Activated CD8-positive, alpha-beta memory T cell treated with anti-CD3 and anti-CD28 coated beads, Interleukin-2, amount 10 ng/mL, durations not matched to agents 7 days and 5 days (primary cell): ENCODE measurements at regions of chr22 and their contacts with region 1.

Region 1: GRCh38 chr22:50456466-50457234 is 18.2 kb downstream of the SBF1 start:
- DNase-seq: no peak
- ATAC-seq: no peak
- H3K4me3 Mint-ChIP-seq: no peak overlapping the region
- H3K27ac Mint-ChIP-seq: peak overlapping the region; percentile 18
- H3K4me1 Mint-ChIP-seq: peaks cover 9% of the 10 kb centered on the region
- H3K27me3 Mint-ChIP-seq: no peaks in the 10 kb centered on the region

Region 2: GRCh38 chr22:50341977-50342650 is 114.5 kb before region 1 on chr22:
- CTCF ChIA-PET with region 1: no interaction called
- DNase-seq: peak; percentile 93
- ATAC-seq: peak; percentile 58
- H3K4me3 Mint-ChIP-seq: peak overlapping the region; percentile 77
- H3K27ac Mint-ChIP-seq: peak overlapping the region; percentile 89
- H3K4me1 Mint-ChIP-seq: peaks cover 8% of the 10 kb centered on the region
- H3K27me3 Mint-ChIP-seq: no peaks in the 10 kb centered on the region

Region 3: DNA sequence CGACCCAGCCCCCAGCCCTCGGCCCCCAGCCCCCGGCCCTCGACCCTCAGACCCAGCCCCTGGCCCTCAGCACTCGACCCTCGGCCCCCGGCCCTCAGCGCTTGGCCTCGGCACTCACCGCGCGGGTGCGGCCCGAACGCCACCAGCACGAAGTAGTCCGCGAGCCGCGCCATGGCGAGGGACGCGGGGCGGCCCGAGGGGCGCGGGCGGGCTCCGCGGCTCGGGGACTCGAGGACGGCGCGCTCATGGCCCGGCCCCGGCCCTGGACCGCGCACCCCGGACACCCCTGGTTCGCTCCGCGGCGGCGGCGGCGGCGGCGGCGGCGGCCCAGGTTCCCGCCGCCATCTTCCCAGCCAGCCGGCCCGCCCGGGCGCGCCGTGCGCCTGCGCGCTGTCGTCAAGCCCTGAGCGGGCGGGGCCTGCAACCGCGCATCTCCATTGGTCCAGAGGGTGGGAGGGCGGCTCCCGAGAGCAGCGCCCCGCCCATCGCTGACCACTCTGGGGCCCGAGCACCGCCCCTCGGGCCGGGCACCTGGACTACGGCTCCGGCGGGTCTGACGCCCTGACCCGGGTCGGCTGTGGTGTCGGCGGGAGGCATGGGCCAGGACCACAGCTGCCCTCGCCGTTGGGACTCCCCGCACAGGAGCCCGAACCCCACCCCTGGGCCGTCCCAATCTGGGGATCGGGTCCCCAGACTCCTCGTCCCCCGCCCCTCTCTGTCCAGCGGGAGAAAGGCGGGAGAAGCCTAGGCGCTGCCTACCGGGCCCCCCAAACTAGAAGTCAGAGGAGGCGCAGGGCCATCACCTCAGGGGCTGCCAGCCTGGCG is 18.2 kb after region 1 on chr22 and contains the start of gene SBF1:
- CTCF ChIA-PET with region 1: interaction called, 10 read pairs
- DNase-seq: peak; percentile 92
- ATAC-seq: peak; percentile 83
- H3K4me3 Mint-ChIP-seq: peak within 1 kb of the TSS; percentile 93
- H3K27ac Mint-ChIP-seq: peak within 1 kb of the TSS; percentile 95
- H3K4me1 Mint-ChIP-seq: peaks cover 50% of the 10 kb centered on the region
- H3K27me3 Mint-ChIP-seq: peaks cover 10% of the 10 kb centered on the region
- total RNA-seq, gene SBF1: 192 to 207 TPM